Left cardiac atrium (tissue), 4 donors: ENCODE measurements at regions of chr17 and their contacts with region 1.

Region 1: GRCh38 chr17:62916681-62917571 is 49.1 kb upstream of the TANC2 start:
- DNase-seq: peak; percentile 54
- ATAC-seq: peak; percentile 55 to 90

Region 2: GRCh38 chr17:62975206-62975605 is 58.3 kb after region 1 on chr17:
- intact Hi-C with region 1: loop called in 1 of 2 experiments (anchors 10 kb)
- DNase-seq: no peak
- ATAC-seq: no peak

Region 3: DNA sequence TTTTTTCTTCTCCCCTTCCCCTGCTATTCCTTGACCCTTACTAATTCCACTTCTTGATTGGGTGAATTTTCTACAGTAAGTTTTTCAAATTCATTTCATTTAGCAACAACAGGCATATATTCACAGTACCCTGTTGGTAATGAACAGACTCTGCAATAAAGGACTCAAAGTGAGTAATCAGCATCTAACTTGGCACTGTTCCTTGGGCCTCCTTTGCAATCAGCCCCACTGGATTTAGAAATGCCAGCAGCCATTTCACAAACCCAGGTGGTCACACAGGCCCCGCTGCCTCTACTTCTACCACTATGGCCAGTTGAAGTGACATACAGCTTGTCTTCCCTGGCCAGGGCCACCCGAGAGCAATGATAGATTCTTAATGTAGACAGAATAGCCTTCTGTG is 415.4 kb after region 1 on chr17:
- intact Hi-C with region 1: no loop called
- DNase-seq: no peak
- ATAC-seq: no peak

Region 4: GRCh38 chr17:63741221-63742049 is 824.5 kb after region 1 on chr17 and contains the start of gene STRADA:
- intact Hi-C with region 1: no loop called
- DNase-seq: peak; percentile 98
- ATAC-seq: peak; percentile 99 to 100
- total RNA-seq, gene STRADA: 21.2 to 23.7 TPM